Mammary epithelial cell (primary cell): ENCODE measurements at regions of chr1 and their contacts with region 1.

Region 1: DNA sequence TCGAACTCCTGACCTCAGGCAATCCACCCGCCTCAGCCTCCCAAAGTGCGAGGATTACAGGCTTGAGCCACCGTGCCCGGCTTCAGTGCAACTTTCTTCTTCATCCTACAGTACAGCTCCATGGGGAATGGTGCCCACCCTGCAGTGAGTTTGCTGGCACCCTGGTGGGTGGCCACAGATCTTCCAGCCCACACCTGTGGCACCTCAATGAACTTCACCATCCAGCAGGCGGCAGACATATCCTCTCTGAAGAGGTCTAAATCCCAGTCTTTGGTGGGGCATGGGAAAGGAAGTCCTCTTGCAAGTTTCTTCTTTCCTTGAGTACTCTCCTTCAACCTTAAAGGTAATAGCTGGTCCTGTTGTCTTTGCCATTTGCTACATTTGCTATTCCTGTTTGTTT is 18.1 kb upstream of the ZBTB8A start:
- DNase-seq: no peak
- H3K4me3 ChIP-seq: no peak overlapping the region
- H3K27ac ChIP-seq: no peak overlapping the region
- H3K4me1 ChIP-seq: no peaks in the 10 kb centered on the region
- H3K27me3 ChIP-seq: no peaks in the 10 kb centered on the region
- CTCF ChIP-seq: peak in 1 of 2 donors; percentile 18

Region 2: GRCh38 chr1:32619701-32620485 is 98.7 kb after region 1 on chr1:
- CTCF ChIA-PET with region 1: no interaction called
- dilution Hi-C with region 1: no loop called
- in situ Hi-C with region 1: no loop called
- intact Hi-C with region 1: loop called (anchors 1 kb)
- DNase-seq: no peak
- H3K4me3 ChIP-seq: no peak overlapping the region
- H3K27ac ChIP-seq: no peak overlapping the region
- H3K4me1 ChIP-seq: no peaks in the 10 kb centered on the region
- H3K27me3 ChIP-seq: no peaks in the 10 kb centered on the region
- CTCF ChIP-seq: peak in 1 of 2 donors; percentile 20

Region 3: DNA sequence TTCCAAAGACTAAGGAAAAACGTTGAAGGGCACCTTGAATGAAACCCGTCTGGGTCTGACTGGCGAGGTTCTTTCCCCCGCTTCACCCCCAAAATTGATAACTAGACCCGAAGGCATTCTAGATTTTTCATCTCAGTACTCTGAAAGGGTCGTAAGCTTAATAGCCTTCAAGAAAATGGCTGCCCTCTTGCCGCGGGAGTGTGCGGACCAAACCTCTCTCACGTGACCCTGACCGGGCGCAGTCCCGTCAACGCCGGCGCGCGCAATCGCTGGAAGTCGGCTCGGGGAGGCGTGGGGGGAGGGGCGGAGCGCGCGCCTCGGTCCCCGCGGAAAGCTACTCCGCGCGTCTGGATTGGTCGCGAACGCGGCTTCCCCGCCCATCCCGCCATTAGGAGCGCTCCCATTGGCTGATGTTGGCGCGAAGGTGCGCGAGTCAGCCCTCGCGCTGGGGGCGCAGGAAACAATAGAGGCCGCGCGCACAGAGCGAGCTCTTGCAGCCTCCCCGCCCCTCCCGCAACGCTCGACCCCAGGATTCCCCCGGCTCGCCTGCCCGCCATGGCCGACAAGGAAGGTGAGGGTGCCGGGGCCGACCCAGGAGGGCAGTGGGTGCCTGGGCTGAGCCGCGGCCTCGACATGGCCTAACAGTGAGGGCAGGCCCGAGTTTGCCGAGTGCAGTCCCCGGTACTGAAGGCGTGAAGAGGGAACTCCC is 129.7 kb after region 1 on chr1 and contains the start of gene RBBP4:
- CTCF ChIA-PET with region 1: no interaction called
- dilution Hi-C with region 1: no loop called
- in situ Hi-C with region 1: no loop called
- intact Hi-C with region 1: loop called (anchors 2 kb)
- DNase-seq: peak; percentile 98
- H3K4me3 ChIP-seq: peak within 1 kb of the TSS; percentile 94 to 99 (median 99)
- H3K27ac ChIP-seq: peak within 1 kb of the TSS; percentile 99
- H3K4me1 ChIP-seq: peaks cover 20% of the 10 kb centered on the region
- H3K27me3 ChIP-seq: no peaks in the 10 kb centered on the region
- CTCF ChIP-seq: no peak
- total RNA-seq, gene RBBP4: 108 to 110 TPM

Region 4: DNA sequence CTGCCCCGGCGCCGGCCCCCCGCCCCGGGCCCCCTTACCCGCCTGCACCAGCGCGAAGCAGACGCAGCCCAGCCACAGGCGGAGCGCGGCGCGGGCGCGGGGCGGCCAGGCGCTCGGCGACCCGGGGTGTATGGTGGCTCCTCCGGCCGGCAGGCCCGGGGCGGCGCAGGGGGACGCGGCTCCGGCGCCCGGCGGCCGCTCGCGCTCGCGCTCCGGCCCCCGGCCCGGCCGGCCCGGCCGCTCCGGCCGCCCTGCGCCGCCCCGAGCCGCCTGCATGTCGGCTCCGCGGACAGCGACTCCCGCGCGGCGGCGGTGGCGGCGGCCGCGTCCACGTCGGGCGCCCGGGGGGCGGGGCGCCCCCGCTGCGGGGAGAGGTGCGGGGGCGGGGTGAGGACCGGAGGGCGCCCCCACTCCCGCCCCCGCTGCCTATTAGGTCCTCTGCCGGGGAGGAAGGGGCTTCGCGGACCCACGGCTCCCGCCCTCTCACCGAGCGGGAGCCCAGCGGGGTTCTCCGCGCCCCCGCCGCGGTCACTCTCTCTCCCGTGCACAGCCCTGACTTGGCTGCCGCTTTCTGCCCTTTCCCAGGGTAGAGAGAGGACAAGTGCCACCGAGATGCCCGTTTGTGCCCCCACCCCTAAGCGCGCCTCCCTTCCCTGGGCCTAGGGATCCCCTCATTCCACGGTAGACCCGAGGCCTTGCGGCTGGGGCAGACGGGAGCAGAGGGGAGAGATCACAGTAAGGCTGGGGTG is 349.6 kb after region 1 on chr1 and contains the start of gene FNDC5:
- CTCF ChIA-PET with region 1: interaction called, 4 read pairs
- dilution Hi-C with region 1: no loop called
- in situ Hi-C with region 1: no loop called
- intact Hi-C with region 1: loop called (anchors 1 kb)
- DNase-seq: no peak
- H3K4me3 ChIP-seq: peak within 1 kb of the TSS in 2 of 3 experiments; percentile 30 to 40
- H3K27ac ChIP-seq: no peak within 1 kb of the TSS
- H3K4me1 ChIP-seq: no peaks in the 10 kb centered on the region
- H3K27me3 ChIP-seq: peaks cover 8% of the 10 kb centered on the region
- CTCF ChIP-seq: no peak
- total RNA-seq, gene FNDC5: not detected

Region 5: GRCh38 chr1:33086384-33086850 is 565.3 kb after region 1 on chr1:
- CTCF ChIA-PET with region 1: no interaction called
- dilution Hi-C with region 1: no loop called
- in situ Hi-C with region 1: no loop called
- intact Hi-C with region 1: loop called (anchors 5 kb)
- DNase-seq: peak; percentile 51
- H3K4me3 ChIP-seq: no peak overlapping the region
- H3K27ac ChIP-seq: no peak overlapping the region
- H3K4me1 ChIP-seq: peaks cover 7% of the 10 kb centered on the region
- H3K27me3 ChIP-seq: no peaks in the 10 kb centered on the region
- CTCF ChIP-seq: peak; percentile 75 to 89